Sigmoid colon (tissue), 7 donors: ENCODE measurements at regions of chr6 and their contacts with region 1.

Region 1: GRCh38 chr6:119129148-119129967 is 50.9 kb upstream of the FAM184A start:
- DNase-seq: no peak
- H3K4me3 ChIP-seq: no peak overlapping the region
- H3K27ac ChIP-seq: no peak overlapping the region
- H3K4me1 ChIP-seq: peaks cover 0 to 14% (median 12%) of the 10 kb centered on the region in 4 donors
- H3K27me3 ChIP-seq: no peaks in the 10 kb centered on the region
- CTCF ChIP-seq: peak; percentile 22 to 88 (median 71)
- EP300 ChIP-seq: no peak
- POLR2A ChIP-seq: no peak

Region 2: DNA sequence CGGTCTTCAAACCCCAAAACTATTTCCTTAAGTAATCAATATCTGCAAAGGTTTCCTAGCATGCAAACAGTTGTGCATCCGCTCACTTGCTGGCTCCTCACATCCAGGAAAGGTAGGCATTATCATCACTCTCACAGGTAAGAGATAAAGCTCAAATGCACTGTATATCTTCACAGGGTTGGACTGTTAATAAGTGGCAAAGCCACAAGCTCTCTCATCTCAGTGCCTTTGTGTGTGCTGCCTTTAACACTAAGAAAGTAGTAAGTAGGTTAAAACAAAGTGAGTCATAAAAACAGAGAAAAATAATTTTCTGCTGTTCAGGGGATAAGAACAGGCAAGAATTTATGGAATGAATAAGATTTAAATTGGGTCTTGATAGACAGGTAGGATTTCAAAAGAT is 198.9 kb after region 1 on chr6:
- intact Hi-C with region 1: loop called (anchors 5 kb)
- DNase-seq: no peak
- H3K4me3 ChIP-seq: no peak overlapping the region
- H3K27ac ChIP-seq: no peak overlapping the region
- H3K4me1 ChIP-seq: peaks cover 0 to 33% (median 21%) of the 10 kb centered on the region in 4 donors
- H3K27me3 ChIP-seq: no peaks in the 10 kb centered on the region
- CTCF ChIP-seq: no peak
- EP300 ChIP-seq: no peak
- POLR2A ChIP-seq: no peak

Region 3: DNA sequence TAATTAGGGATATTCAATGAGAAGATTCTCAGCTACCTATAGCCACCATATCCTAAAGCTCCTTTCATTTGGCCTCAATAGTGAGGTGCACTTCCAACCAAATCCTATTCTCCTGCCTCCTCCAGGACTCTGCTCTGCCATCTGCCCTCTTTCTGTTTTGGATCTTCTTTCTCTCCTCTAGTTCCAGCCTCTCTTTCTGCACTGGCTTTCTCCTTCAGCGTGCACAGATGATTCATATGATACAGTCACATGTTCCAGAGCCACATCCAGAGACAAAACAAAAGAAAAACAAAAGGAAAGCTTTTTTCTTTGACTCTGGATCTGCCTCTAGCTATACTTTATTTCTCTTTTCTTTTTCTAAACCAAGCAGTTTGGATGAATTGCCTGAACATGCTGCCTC is 752.1 kb after region 1 on chr6:
- intact Hi-C with region 1: no loop called
- DNase-seq: no peak
- H3K4me3 ChIP-seq: no peak overlapping the region
- H3K27ac ChIP-seq: peak overlapping the region in 1 of 4 donors; percentile 12
- H3K4me1 ChIP-seq: peaks cover 0 to 11% (median 2%) of the 10 kb centered on the region in 4 donors
- H3K27me3 ChIP-seq: no peaks in the 10 kb centered on the region
- CTCF ChIP-seq: no peak
- EP300 ChIP-seq: no peak
- POLR2A ChIP-seq: no peak

Region 4: DNA sequence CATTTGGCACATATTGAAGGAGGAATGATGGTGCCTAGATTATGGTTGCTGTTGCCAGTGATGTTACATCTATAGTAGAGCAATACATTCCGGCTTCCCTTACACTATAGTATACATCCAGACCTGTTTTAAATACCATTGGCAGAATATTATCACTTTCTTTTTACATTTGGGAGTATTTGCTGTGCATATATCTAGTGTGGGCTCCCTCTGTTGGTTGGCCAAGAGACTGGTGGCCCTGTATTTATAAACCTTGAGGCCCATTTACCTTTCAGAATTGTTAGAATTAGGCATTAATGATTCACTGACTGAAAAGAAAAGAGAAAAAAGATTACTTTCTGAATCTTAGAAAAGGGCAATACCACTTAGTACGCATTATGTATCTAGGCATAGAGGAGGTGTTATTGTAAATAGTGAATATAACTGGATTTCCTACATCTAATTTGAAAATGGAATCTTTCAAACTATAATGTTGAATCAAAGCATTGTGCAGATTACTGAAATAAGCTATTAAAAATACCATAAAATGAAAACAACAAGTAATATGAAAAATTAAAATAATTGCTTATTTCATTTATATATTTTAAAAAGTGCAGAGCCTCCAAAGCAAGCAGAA is 849.0 kb after region 1 on chr6:
- intact Hi-C with region 1: loop called (anchors 10 kb)
- DNase-seq: no peak
- H3K4me3 ChIP-seq: no peak overlapping the region
- H3K27ac ChIP-seq: no peak overlapping the region
- H3K4me1 ChIP-seq: peaks cover 0 to 19% (median 4%) of the 10 kb centered on the region in 4 donors
- H3K27me3 ChIP-seq: no peaks in the 10 kb centered on the region
- CTCF ChIP-seq: peak in 3 of 4 experiments; percentile 23 to 51 (median 31)
- EP300 ChIP-seq: no peak
- POLR2A ChIP-seq: no peak